ENCODE measurements at regions of chr1 and their contacts with region 1.

Region 1: DNA sequence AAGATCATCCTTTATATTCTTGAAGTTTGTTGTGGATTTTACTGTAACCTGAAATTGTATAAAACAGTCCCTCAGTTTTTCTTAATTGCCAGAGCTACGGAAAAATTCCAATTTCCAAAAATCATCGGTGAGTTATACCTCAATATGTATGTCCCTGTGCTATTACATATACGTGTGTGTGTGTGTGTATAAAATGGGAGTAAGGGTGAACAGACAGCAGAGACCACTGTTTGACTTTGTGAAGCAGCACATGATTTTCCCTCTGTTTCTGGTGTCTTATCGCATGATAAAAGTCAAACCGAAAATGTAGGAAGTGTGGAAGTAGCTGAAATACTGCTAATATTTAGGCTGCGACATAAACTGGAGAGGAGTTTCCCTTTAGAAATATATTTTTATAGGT is 1.2 kb downstream of the OR2T1 start:
- DNase-seq: no peak
- H3K4me3 Mint-ChIP-seq: no peak overlapping the region
- H3K27ac Mint-ChIP-seq: no peak overlapping the region
- H3K4me1 Mint-ChIP-seq: peaks cover 3% of the 10 kb centered on the region
- H3K27me3 Mint-ChIP-seq: no peaks in the 10 kb centered on the region

Region 2: GRCh38 chr1:248361121-248361715 is 42.8 kb before region 1 on chr1 and contains the start of gene OR2T4:
- intact Hi-C with region 1: no loop called
- DNase-seq: no peak
- H3K4me3 Mint-ChIP-seq: no peak within 1 kb of the TSS
- H3K27ac Mint-ChIP-seq: no peak within 1 kb of the TSS
- H3K4me1 Mint-ChIP-seq: no peaks in the 10 kb centered on the region
- H3K27me3 Mint-ChIP-seq: no peaks in the 10 kb centered on the region
- total RNA-seq, gene OR2T4: not detected in 2 replicates

Region 3: DNA sequence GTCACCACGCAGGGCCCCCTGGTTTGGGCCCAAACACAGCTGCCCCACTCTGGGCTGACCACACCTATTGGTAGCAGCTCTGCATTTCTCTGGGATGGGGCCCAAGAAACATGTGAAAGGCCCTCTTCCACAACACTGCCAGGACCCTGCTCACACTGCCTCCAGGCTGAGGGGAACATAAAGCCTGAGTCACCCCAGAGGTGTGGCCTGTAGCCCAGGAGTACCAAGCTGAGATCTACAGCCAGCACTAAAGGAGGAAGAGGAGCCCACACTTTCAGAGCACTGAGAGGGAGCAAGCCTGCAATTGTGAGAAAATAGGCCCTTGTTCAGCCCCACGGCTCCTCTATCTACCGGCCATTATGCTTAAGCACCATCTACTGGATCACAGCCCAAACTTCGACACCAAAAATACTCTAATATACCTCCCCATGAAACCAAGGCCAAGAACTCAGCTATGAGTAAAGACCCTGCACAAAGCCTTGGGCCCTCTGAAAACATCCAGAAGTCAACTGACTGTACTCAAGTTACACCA is 207.9 kb after region 1 on chr1:
- intact Hi-C with region 1: loop called (anchors 2 kb)
- DNase-seq: no peak
- H3K4me3 Mint-ChIP-seq: no peak overlapping the region
- H3K27ac Mint-ChIP-seq: peak overlapping the region; percentile 13
- H3K4me1 Mint-ChIP-seq: peaks cover 18% of the 10 kb centered on the region
- H3K27me3 Mint-ChIP-seq: no peaks in the 10 kb centered on the region

Region 4: GRCh38 chr1:248686815-248687214 is 282.8 kb after region 1 on chr1:
- intact Hi-C with region 1: loop called (anchors 1 kb)
- DNase-seq: peak; percentile 78
- H3K4me3 Mint-ChIP-seq: no peak overlapping the region
- H3K27ac Mint-ChIP-seq: no peak overlapping the region
- H3K4me1 Mint-ChIP-seq: peaks cover 4% of the 10 kb centered on the region
- H3K27me3 Mint-ChIP-seq: peaks cover 3% of the 10 kb centered on the region

Region 5: GRCh38 chr1:248807067-248807737 is 403.2 kb after region 1 on chr1:
- intact Hi-C with region 1: loop called (anchors 1 kb)
- DNase-seq: peak; percentile 85
- H3K4me3 Mint-ChIP-seq: no peak overlapping the region
- H3K27ac Mint-ChIP-seq: no peak overlapping the region
- H3K4me1 Mint-ChIP-seq: peaks cover 11% of the 10 kb centered on the region
- H3K27me3 Mint-ChIP-seq: peaks cover 2% of the 10 kb centered on the region

Measured in activated CD4-positive, alpha-beta T cell treated with anti-CD3 and anti-CD28 coated beads, Interleukin-2, amount 10 ng/mL, durations not matched to agents 24 days and 14 days (primary cell).